Gastrocnemius medialis (tissue), 4 donors: ENCODE measurements at regions of chr19 and their contacts with region 1.

Region 1: GRCh38 chr19:56671613-56671994 is at the start of gene ZNF835:
- DNase-seq: peak; percentile 80 to 81
- ATAC-seq: peak; percentile 91 to 97
- H3K4me3 ChIP-seq: peak within 1 kb of the TSS; percentile 68 to 75 (median 72)
- H3K27ac ChIP-seq: peak within 1 kb of the TSS in 3 of 4 donors; percentile 45 to 64 (median 50)
- H3K4me1 ChIP-seq: peaks cover 8 to 9% of the 10 kb centered on the region in 2 donors
- H3K27me3 ChIP-seq: no peaks in the 10 kb centered on the region
- CTCF ChIP-seq: peak in 1 of 5 experiments; percentile 26
- POLR2A ChIP-seq: no peak
- total RNA-seq, gene ZNF835: 0.27 to 2.4 (median 0.71) TPM

Region 2: DNA sequence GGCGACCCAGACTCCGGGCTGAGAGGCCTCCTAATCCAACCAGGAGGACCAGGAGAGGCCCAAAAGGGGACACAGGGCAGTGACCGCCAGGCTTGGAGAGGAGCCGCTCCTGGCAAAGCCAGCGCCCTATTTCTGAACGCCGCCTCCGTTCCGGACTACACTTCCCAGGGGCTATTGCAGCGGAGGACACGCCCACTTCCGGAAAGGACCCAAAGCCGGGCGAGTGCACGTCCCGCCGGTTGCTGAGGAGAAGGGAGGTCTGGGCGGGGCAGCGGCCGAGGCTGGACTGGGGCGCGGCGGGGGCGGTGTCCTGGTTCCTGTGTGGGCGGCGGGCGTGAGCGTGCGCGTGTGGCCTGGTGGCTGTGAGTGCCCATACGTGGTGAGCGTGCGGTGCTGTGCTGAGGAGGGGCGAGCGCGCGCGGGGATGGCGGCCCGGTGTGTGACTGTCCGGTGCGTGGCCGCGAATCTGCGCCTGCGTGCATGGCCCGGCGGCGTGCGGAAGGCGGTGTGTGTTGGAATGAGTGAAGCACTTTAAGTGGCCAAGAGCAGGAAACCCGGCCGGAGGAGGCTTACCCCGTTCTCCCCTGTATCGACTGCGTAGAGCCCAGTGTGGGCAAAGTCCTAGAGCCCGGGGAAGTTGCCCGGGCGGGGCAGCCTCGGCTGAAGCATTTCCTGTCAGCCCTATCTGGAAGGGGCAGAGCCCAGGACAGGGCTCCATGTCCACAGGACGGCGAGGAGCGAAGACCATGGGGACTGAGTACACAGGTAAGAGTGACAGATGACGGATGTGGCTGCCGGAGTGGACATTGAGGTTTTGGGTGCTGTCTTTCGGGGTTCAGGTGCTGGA is 104.1 kb before region 1 on chr19 and contains the start of gene ZNF470:
- in situ Hi-C with region 1: no loop called
- intact Hi-C with region 1: no loop called
- DNase-seq: peak; percentile 90 to 92
- ATAC-seq: peak; percentile 99
- H3K4me3 ChIP-seq: peak within 1 kb of the TSS; percentile 80 to 98 (median 85)
- H3K27ac ChIP-seq: peak within 1 kb of the TSS; percentile 83 to 91 (median 86)
- H3K4me1 ChIP-seq: peaks cover 13 to 14% of the 10 kb centered on the region in 2 donors
- H3K27me3 ChIP-seq: no peaks in the 10 kb centered on the region
- CTCF ChIP-seq: peak in 1 of 5 experiments; percentile 5
- POLR2A ChIP-seq: peak; percentile 46 to 50
- total RNA-seq, gene ZNF470: 0.32 to 2.0 (median 0.83) TPM

Region 3: GRCh38 chr19:56594783-56595547 is 76.6 kb before region 1 on chr19 and contains the start of gene ZNF71:
- in situ Hi-C with region 1: no loop called
- intact Hi-C with region 1: loop called (anchors 2 kb)
- DNase-seq: peak; percentile 71 to 75
- ATAC-seq: peak; percentile 77 to 90
- H3K4me3 ChIP-seq: peak within 1 kb of the TSS; percentile 73 to 98 (median 84)
- H3K27ac ChIP-seq: peak within 1 kb of the TSS; percentile 76 to 82 (median 78)
- H3K4me1 ChIP-seq: peaks cover 12 to 18% of the 10 kb centered on the region in 2 donors
- H3K27me3 ChIP-seq: no peaks in the 10 kb centered on the region
- CTCF ChIP-seq: no peak
- POLR2A ChIP-seq: peak in 1 of 2 donors; percentile 28
- total RNA-seq, gene ZNF71: 6.7 to 7.5 (median 7.4) TPM

Region 4: DNA sequence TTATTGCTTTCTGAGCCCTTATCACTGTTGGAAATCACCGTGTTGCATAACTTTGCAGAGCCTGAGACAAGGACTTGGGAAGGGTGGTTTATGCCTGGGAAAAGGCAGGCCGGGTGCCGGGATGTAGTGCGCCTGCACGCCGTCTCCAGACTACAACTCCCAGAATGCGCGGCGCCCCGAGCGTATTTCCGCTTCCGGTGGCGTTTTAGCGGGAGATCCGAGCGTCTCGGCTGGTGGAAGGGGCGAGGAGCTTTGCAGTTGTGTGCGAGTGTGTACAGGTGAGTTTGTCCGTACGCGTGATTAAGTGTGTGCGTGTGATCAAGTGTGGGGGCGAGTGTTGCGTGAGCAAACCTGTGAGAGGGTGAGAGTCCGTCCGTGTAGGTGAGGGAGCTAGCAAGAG is 93.5 kb after region 1 on chr19:
- in situ Hi-C with region 1: no loop called
- intact Hi-C with region 1: no loop called
- DNase-seq: no peak
- ATAC-seq: no peak
- H3K4me3 ChIP-seq: peak overlapping the region; percentile 21 to 53 (median 42)
- H3K27ac ChIP-seq: no peak overlapping the region
- H3K4me1 ChIP-seq: no peaks in the 10 kb centered on the region
- H3K27me3 ChIP-seq: no peaks in the 10 kb centered on the region
- CTCF ChIP-seq: no peak
- POLR2A ChIP-seq: no peak